ENCODE measurements at regions of chr7 and their contacts with region 1.

Region 1: GRCh38 chr7:103718482-103719415 is 270.7 kb downstream of the RELN start:
- DNase-seq: peak; percentile 55
- H3K4me3 ChIP-seq: no peak overlapping the region
- H3K27ac ChIP-seq: peak overlapping the region; percentile 74
- H3K4me1 ChIP-seq: peaks cover 8% of the 10 kb centered on the region
- H3K27me3 ChIP-seq: no peaks in the 10 kb centered on the region
- CTCF ChIP-seq: no peak

Region 2: GRCh38 chr7:103630318-103630717 is 88.4 kb before region 1 on chr7:
- CTCF ChIA-PET with region 1: no interaction called
- dilution Hi-C with region 1: no loop called
- in situ Hi-C with region 1: no loop called
- intact Hi-C with region 1: loop called (anchors 5 kb)
- DNase-seq: no peak
- H3K4me3 ChIP-seq: no peak overlapping the region
- H3K27ac ChIP-seq: no peak overlapping the region
- H3K4me1 ChIP-seq: peaks cover 11% of the 10 kb centered on the region
- H3K27me3 ChIP-seq: no peaks in the 10 kb centered on the region
- CTCF ChIP-seq: no peak